Endothelial cell of umbilical vein (primary cell): ENCODE measurements at regions of chr17 and their contacts with region 1.

Region 1: GRCh38 chr17:10646392-10646990 is 10.6 kb downstream of the MYH3 start:
- DNase-seq: peak; percentile 64
- H3K4me3 ChIP-seq: no peak overlapping the region
- H3K27ac ChIP-seq: no peak overlapping the region
- H3K4me1 ChIP-seq: no peaks in the 10 kb centered on the region
- H3K27me3 ChIP-seq: no peaks in the 10 kb centered on the region
- CTCF ChIP-seq: peak; percentile 77 to 86
- POLR2A ChIP-seq: no peak

Region 2: DNA sequence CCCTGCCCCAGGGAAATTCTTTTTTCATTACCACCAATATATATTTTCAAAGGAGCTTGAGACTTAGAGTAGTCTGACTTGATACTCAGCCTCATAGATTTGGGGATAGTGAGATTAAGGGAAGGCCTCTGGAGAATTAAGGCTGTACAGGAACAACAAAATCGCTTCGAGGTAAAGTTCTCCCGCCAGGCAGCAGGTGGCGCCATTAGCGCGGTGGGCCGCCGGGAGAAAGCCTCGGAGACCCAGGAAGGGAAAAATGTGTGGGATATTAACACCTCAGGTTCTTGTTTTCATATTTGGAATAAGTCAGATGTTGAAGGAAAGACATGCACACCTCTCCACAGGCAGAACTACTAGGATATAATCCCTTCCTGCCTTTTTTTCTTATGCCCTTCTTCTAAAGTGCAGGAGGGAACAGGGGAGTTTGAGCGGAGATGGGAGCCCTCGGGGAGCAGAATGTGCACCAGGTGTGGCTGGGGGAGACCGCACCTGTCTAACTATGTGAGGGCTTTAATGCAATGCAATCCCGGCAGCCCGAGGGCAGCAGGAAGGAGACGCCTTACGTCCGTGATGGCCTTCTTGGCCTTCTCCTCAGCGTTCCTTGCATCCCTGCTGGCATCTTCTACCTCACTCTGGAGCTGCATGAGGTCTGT is 15.3 kb before region 1 on chr17:
- CTCF ChIA-PET with region 1: interaction called, 63 read pairs
- POLR2A ChIA-PET with region 1: no interaction called
- dilution Hi-C with region 1: no loop called
- intact Hi-C with region 1: no loop called
- DNase-seq: peak; percentile 26
- H3K4me3 ChIP-seq: no peak overlapping the region
- H3K27ac ChIP-seq: no peak overlapping the region
- H3K4me1 ChIP-seq: no peaks in the 10 kb centered on the region
- H3K27me3 ChIP-seq: no peaks in the 10 kb centered on the region
- CTCF ChIP-seq: peak; percentile 85 to 87
- POLR2A ChIP-seq: no peak

Region 3: DNA sequence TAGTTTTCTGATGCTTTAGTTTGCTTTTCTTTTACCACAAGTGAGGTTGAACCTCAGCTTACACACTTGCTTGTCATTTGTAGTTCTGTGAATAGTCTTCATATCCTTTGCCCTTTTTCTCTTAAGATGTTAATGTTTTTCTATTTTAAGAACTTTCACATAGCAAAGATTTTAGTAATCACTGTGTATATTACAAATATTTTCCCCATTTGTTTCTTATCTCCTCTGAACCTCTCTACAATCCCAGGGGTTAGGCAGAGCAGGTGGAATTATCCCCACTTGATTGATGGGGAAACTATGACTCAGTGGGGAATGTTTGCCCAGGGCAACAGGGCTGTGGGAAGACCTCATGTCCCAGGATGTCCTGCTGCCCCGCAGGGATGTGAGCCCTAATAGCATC is 22.3 kb after region 1 on chr17:
- CTCF ChIA-PET with region 1: interaction called, 11 read pairs
- POLR2A ChIA-PET with region 1: no interaction called
- dilution Hi-C with region 1: no loop called
- intact Hi-C with region 1: no loop called
- DNase-seq: peak; percentile 32
- H3K4me3 ChIP-seq: no peak overlapping the region
- H3K27ac ChIP-seq: no peak overlapping the region
- H3K4me1 ChIP-seq: peaks cover 2% of the 10 kb centered on the region
- H3K27me3 ChIP-seq: no peaks in the 10 kb centered on the region
- CTCF ChIP-seq: no peak
- POLR2A ChIP-seq: no peak

Region 4: DNA sequence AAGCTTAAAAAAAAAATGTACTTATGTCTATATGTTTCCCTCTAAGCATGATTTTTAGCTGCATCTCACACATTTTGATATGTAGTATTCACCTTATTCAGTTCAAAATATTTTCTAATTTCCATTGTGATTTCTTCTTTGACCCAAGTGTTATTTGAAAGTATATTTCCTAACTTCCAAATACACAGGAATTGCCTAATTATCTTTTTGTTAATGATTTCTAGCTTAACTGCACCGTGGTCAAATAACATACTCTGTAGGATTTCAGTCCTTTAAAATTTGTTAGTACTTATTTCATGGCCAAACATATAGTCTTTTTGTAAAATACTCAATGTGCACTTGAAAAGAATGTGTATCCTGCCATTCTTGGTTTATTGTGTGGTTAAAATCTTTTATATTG is 72.1 kb after region 1 on chr17:
- CTCF ChIA-PET with region 1: no interaction called
- POLR2A ChIA-PET with region 1: no interaction called
- dilution Hi-C with region 1: no loop called
- intact Hi-C with region 1: no loop called
- DNase-seq: no peak
- H3K4me3 ChIP-seq: no peak overlapping the region
- H3K27ac ChIP-seq: no peak overlapping the region
- H3K4me1 ChIP-seq: no peaks in the 10 kb centered on the region
- H3K27me3 ChIP-seq: no peaks in the 10 kb centered on the region
- CTCF ChIP-seq: no peak
- POLR2A ChIP-seq: no peak

Region 5: DNA sequence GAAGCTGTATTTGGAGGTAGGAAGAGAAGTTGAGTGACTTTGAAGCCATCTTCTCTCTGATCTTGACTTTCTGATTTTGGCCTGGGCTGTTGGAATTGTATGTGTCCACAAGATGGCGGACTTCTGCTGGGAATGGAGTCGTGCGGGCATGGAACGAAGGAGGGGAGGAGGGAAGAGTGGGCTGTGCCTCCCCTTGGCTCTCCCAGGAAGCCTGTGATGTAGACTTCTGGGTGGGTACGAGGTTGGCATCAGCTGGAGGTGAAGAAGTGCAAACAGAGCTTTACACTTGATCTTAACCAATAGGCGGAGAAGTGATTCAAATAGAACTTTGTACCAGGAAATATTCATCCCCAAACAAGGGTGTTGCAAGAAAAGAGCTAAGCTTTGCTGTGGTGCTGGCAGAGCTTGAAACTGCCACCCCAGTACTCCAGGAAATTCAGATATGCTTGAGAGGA is 90.7 kb after region 1 on chr17:
- CTCF ChIA-PET with region 1: interaction called, 13 read pairs
- POLR2A ChIA-PET with region 1: no interaction called
- dilution Hi-C with region 1: no loop called
- intact Hi-C with region 1: loop called (anchors 1 kb)
- DNase-seq: peak; percentile 45
- H3K4me3 ChIP-seq: no peak overlapping the region
- H3K27ac ChIP-seq: no peak overlapping the region
- H3K4me1 ChIP-seq: no peaks in the 10 kb centered on the region
- H3K27me3 ChIP-seq: peaks cover 0 to 3% of the 10 kb centered on the region in 2 experiments
- CTCF ChIP-seq: peak; percentile 69 to 77
- POLR2A ChIP-seq: no peak

Region 6: GRCh38 chr17:11144358-11145233 is 498.1 kb after region 1 on chr17:
- CTCF ChIA-PET with region 1: interaction called, 7 read pairs
- POLR2A ChIA-PET with region 1: no interaction called
- dilution Hi-C with region 1: no loop called
- intact Hi-C with region 1: loop called (anchors 5 kb)
- DNase-seq: no peak
- H3K4me3 ChIP-seq: no peak overlapping the region
- H3K27ac ChIP-seq: no peak overlapping the region
- H3K4me1 ChIP-seq: no peaks in the 10 kb centered on the region
- H3K27me3 ChIP-seq: no peaks in the 10 kb centered on the region
- CTCF ChIP-seq: peak; percentile 8 to 28
- POLR2A ChIP-seq: no peak